Transverse colon (tissue), 4 donors: ENCODE measurements at regions of chr7 and their contacts with region 1.

Region 1: DNA sequence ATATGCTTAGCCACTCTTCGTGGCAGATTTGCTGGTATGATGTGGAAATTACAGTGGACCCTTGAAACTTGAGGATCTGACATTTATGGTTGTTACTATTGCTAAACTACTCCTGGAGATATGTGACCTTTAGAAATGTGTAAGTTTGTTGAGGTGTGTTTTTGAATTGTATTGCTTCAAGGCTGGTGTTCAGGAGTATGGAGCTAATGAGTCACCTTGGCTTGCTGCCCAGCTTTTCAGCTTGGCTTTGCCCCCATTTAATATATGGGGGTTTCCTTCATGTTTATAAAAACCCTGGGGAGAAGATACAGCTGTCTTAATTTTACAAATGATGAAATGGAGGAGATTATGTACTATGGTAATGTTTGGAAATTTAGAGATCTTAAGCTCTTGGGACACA is 11.6 kb downstream of the HBP1 start:
- DNase-seq: peak; percentile 56
- H3K4me3 ChIP-seq: no peak overlapping the region
- H3K27ac ChIP-seq: peak overlapping the region; percentile 5 to 48 (median 36)
- H3K4me1 ChIP-seq: peaks cover 12 to 38% (median 23%) of the 10 kb centered on the region in 4 donors
- H3K27me3 ChIP-seq: no peaks in the 10 kb centered on the region
- CTCF ChIP-seq: no peak
- EP300 ChIP-seq: no peak
- POLR2A ChIP-seq: no peak

Region 2: DNA sequence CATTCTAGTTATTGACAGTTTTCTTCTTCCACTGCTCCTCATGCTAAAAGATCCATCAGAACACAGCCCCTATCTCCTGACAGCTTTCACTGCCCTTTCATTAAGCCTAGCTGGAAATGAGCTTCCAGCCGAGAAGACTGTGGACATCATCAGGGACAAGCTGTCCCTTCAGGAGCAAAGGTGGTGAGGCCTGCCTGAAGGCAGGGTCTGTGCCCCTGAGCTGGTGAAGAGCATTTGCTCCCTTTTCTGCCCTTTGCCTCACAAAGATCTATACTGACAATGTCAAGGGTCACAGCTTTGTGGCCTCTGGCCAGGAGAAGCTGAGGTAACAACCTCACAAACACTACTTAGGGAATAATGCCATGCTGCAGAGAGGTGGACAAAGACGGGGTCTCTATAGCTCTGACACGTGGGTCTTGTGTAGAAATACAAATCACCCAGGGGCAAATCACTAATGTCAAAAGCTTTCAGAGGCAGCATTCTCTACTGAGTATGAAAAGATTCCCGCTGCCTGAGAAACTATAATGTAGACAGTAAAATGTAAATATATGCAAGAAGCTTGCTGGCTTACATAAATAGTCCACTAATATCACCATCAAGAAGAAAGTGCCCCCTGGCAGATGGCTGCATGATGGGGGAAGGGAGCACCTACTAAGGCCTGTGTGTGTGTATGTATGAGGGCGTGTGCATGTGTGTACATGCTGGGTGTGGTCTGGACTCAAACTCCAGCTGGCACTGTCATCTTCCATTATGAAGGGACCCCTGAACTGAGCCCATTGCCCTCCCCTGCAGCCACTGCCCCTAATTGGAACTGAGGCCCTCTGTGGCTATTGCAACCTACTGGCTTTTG is 44.2 kb after region 1 on chr7:
- in situ Hi-C with region 1: no loop called
- intact Hi-C with region 1: no loop called
- DNase-seq: no peak
- H3K4me3 ChIP-seq: no peak overlapping the region
- H3K27ac ChIP-seq: no peak overlapping the region
- H3K4me1 ChIP-seq: peaks cover 0 to 13% (median 8%) of the 10 kb centered on the region in 4 donors
- H3K27me3 ChIP-seq: no peaks in the 10 kb centered on the region
- CTCF ChIP-seq: no peak
- EP300 ChIP-seq: no peak
- POLR2A ChIP-seq: no peak

Region 3: DNA sequence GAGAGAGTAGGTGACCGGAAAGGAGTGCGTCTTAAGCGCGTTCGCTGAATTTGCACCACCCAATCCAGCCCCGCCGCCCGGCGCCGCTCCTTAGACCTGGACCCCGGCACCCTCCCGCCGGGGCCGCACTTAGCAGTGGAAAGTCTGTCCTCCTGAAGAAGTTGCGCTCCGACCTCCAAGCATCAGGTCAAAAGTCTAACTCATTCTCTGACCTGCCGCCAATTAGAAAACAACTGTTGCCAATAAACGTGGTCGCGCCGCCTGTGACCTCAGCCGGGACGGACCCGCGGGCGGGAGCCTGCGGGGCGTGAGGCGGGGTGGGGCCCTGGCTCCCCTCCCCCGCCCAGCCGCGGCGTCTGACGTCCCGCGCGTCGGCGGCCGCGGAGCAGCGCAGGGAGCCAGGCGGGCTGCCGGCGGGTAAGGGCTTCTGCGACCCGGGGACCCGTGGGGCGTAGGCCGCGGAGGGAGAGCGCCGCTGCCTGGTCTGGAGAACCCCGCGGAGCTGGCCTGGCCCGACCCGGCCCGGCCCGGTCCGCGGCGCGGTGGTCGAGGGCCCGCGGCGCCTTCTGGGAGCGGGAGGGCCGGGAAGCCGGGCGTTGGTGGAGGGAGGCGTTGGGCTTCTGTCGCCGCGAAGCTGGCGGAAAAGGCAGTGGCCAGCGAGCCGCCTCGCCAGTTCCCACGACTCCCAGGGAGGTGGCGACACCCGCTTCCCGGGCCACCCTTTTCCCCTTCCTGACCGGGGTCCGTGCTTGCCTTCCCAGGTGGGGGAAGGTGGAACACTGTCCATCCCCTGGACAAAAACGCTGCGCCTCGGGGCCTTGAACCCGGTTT is 399.7 kb after region 1 on chr7 and contains the start of gene BCAP29:
- in situ Hi-C with region 1: loop called in 1 of 4 experiments (anchors 25 kb)
- intact Hi-C with region 1: no loop called
- DNase-seq: peak; percentile 81
- H3K4me3 ChIP-seq: peak within 1 kb of the TSS; percentile 69 to 86 (median 79)
- H3K27ac ChIP-seq: peak within 1 kb of the TSS; percentile 95 to 97 (median 96)
- H3K4me1 ChIP-seq: peaks cover 13 to 42% (median 20%) of the 10 kb centered on the region in 4 donors
- H3K27me3 ChIP-seq: no peaks in the 10 kb centered on the region
- CTCF ChIP-seq: peak in 3 of 5 experiments; percentile 22 to 40 (median 25)
- EP300 ChIP-seq: peak; percentile 25
- POLR2A ChIP-seq: peak; percentile 59
- total RNA-seq, gene BCAP29: 8.6 to 96.5 (median 73.1) TPM

Region 4: GRCh38 chr7:107758667-107759066 is 578.3 kb after region 1 on chr7:
- in situ Hi-C with region 1: no loop called
- intact Hi-C with region 1: no loop called
- DNase-seq: no peak
- H3K4me3 ChIP-seq: no peak overlapping the region
- H3K27ac ChIP-seq: no peak overlapping the region
- H3K4me1 ChIP-seq: no peaks in the 10 kb centered on the region
- H3K27me3 ChIP-seq: no peaks in the 10 kb centered on the region
- CTCF ChIP-seq: no peak
- EP300 ChIP-seq: no peak
- POLR2A ChIP-seq: no peak

Region 5: GRCh38 chr7:107890962-107891635 is 710.7 kb after region 1 on chr7 and contains the start of gene DLD:
- in situ Hi-C with region 1: loop called in 1 of 4 experiments (anchors 25 kb)
- intact Hi-C with region 1: no loop called
- DNase-seq: peak; percentile 96
- H3K4me3 ChIP-seq: peak within 1 kb of the TSS; percentile 55 to 75 (median 66)
- H3K27ac ChIP-seq: peak within 1 kb of the TSS; percentile 94 to 96 (median 94)
- H3K4me1 ChIP-seq: peaks cover 14 to 30% (median 28%) of the 10 kb centered on the region in 4 donors
- H3K27me3 ChIP-seq: no peaks in the 10 kb centered on the region
- CTCF ChIP-seq: peak in 1 of 5 experiments; percentile 15
- EP300 ChIP-seq: no peak
- POLR2A ChIP-seq: peak; percentile 94
- total RNA-seq, gene DLD: 46.0 to 131 (median 126) TPM